Activated naive CD4-positive, alpha-beta T cell treated with anti-CD3 and anti-CD28 coated beads, Interleukin-2, amount 10 ng/mL, durations not matched to agents 7 days and 5 days (primary cell): ENCODE measurements at regions of chr16 and their contacts with region 1.

Region 1: GRCh38 chr16:67514382-67514828 is 14.2 kb upstream of the RIPOR1 start:
- DNase-seq: peak; percentile 90
- H3K4me3 Mint-ChIP-seq: no peak overlapping the region
- H3K27ac Mint-ChIP-seq: peak overlapping the region; percentile 84
- H3K4me1 Mint-ChIP-seq: peaks cover 38% of the 10 kb centered on the region
- H3K27me3 Mint-ChIP-seq: peaks cover 16% of the 10 kb centered on the region

Region 2: GRCh38 chr16:67063008-67063407 is 451.4 kb before region 1 on chr16:
- CTCF ChIA-PET with region 1: no interaction called
- DNase-seq: no peak
- H3K4me3 Mint-ChIP-seq: no peak overlapping the region
- H3K27ac Mint-ChIP-seq: peak overlapping the region; percentile 8
- H3K4me1 Mint-ChIP-seq: peaks cover 26% of the 10 kb centered on the region
- H3K27me3 Mint-ChIP-seq: no peaks in the 10 kb centered on the region

Region 3: GRCh38 chr16:67480833-67481560 is 33.4 kb before region 1 on chr16 and contains the start of gene ATP6V0D1:
- CTCF ChIA-PET with region 1: interaction called, 74 read pairs
- DNase-seq: peak; percentile 99
- H3K4me3 Mint-ChIP-seq: peak within 1 kb of the TSS; percentile 94
- H3K27ac Mint-ChIP-seq: peak within 1 kb of the TSS; percentile 97
- H3K4me1 Mint-ChIP-seq: peaks cover 47% of the 10 kb centered on the region
- H3K27me3 Mint-ChIP-seq: no peaks in the 10 kb centered on the region

Region 4: GRCh38 chr16:67490335-67491096 is 23.9 kb before region 1 on chr16:
- CTCF ChIA-PET with region 1: interaction called, 167 read pairs
- DNase-seq: no peak
- H3K4me3 Mint-ChIP-seq: no peak overlapping the region
- H3K27ac Mint-ChIP-seq: no peak overlapping the region
- H3K4me1 Mint-ChIP-seq: peaks cover 15% of the 10 kb centered on the region
- H3K27me3 Mint-ChIP-seq: no peaks in the 10 kb centered on the region

Region 5: DNA sequence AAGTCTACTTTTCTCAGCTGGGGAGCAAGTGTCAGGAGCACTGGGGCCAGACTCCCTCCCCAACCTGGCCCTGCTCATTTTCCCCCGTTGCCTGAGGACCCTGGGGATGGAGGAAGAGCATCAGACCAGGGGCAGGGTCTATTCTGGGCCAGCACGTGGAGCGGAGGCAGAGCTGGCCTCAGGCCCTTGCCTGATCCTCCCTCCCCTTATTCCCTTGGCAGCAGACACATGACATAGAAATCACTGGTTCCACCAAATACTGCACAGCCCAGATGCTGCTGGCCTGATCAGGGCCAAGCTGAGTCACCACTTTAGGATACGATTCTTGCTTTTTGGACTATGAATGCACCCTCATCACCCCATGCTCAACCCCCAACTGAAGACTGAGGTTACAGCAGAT is 15.3 kb before region 1 on chr16:
- CTCF ChIA-PET with region 1: interaction called, 167 read pairs
- DNase-seq: no peak
- H3K4me3 Mint-ChIP-seq: no peak overlapping the region
- H3K27ac Mint-ChIP-seq: peak overlapping the region; percentile 65
- H3K4me1 Mint-ChIP-seq: peaks cover 35% of the 10 kb centered on the region
- H3K27me3 Mint-ChIP-seq: no peaks in the 10 kb centered on the region

Region 6: GRCh38 chr16:67504041-67505021 is 10.1 kb before region 1 on chr16:
- CTCF ChIA-PET with region 1: interaction called, 27 read pairs
- DNase-seq: peak; percentile 83
- H3K4me3 Mint-ChIP-seq: peak overlapping the region; percentile 31
- H3K27ac Mint-ChIP-seq: peak overlapping the region; percentile 97
- H3K4me1 Mint-ChIP-seq: peaks cover 59% of the 10 kb centered on the region
- H3K27me3 Mint-ChIP-seq: no peaks in the 10 kb centered on the region

Region 7: DNA sequence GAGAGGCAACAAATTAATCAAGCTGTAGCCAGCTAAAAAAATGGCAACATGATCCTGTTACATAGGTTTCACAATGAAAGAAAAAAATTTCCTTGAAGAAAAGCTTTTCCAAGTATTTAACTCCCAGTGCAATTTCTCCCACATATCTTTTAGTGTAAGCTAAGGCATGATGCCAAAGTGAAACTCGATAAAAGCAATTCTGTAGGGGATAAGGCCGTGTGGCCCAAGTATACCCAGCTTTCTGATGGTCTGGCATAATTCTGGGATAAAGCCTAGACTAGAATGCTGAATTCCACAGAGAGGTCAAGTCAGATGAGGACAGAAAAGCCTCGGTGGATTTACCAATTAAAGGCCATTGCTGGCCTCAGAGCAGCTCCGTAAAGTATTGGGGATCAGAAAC is 84.1 kb after region 1 on chr16:
- CTCF ChIA-PET with region 1: no interaction called
- DNase-seq: no peak
- H3K4me3 Mint-ChIP-seq: no peak overlapping the region
- H3K27ac Mint-ChIP-seq: no peak overlapping the region
- H3K4me1 Mint-ChIP-seq: peaks cover 25% of the 10 kb centered on the region
- H3K27me3 Mint-ChIP-seq: no peaks in the 10 kb centered on the region